HepG2 (cell line): ENCODE measurements at regions of chrX and their contacts with region 1.

Region 1: GRCh38 chrX:150547375-150548115 is 20.9 kb upstream of the MTM1 start:
- DNase-seq: no peak
- ATAC-seq: peak; percentile 87
- H3K4me3 ChIP-seq: peak overlapping the region; percentile 23 to 72 (median 37); a peak in 5 of 6 replicates
- H3K27ac ChIP-seq: peak overlapping the region; percentile 48
- H3K4me1 ChIP-seq: peaks cover 71% of the 10 kb centered on the region
- H3K27me3 ChIP-seq: no peaks in the 10 kb centered on the region
- CTCF ChIP-seq: no peak
- EP300 ChIP-seq: no peak
- POLR2A ChIP-seq: peak in 1 of 2 experiments; percentile 18; a peak in 1 of 4 replicates
- RAD21 ChIP-seq: no peak

Region 2: GRCh38 chrX:150568320-150569154 is 21.0 kb after region 1 on chrX and contains the start of gene MTM1:
- CTCF ChIA-PET with region 1: no interaction called
- POLR2A ChIA-PET with region 1: interaction called, 63 read pairs
- in situ Hi-C with region 1: no loop called
- intact Hi-C with region 1: loop called (anchors 2 kb)
- DNase-seq: peak; percentile 91
- ATAC-seq: peak; percentile 78
- H3K4me3 ChIP-seq: peak within 1 kb of the TSS; percentile 76 to 93 (median 77)
- H3K27ac ChIP-seq: peak within 1 kb of the TSS; percentile 89
- H3K4me1 ChIP-seq: peaks cover 45% of the 10 kb centered on the region
- H3K27me3 ChIP-seq: no peaks in the 10 kb centered on the region; a peak in 1 of 5 replicates
- CTCF ChIP-seq: no peak
- EP300 ChIP-seq: no peak
- POLR2A ChIP-seq: peak; percentile 48 to 59; a peak in 3 of 4 replicates
- RAD21 ChIP-seq: no peak
- total RNA-seq, gene MTM1: 15.2 and 27.2 TPM in 2 replicates

Region 3: DNA sequence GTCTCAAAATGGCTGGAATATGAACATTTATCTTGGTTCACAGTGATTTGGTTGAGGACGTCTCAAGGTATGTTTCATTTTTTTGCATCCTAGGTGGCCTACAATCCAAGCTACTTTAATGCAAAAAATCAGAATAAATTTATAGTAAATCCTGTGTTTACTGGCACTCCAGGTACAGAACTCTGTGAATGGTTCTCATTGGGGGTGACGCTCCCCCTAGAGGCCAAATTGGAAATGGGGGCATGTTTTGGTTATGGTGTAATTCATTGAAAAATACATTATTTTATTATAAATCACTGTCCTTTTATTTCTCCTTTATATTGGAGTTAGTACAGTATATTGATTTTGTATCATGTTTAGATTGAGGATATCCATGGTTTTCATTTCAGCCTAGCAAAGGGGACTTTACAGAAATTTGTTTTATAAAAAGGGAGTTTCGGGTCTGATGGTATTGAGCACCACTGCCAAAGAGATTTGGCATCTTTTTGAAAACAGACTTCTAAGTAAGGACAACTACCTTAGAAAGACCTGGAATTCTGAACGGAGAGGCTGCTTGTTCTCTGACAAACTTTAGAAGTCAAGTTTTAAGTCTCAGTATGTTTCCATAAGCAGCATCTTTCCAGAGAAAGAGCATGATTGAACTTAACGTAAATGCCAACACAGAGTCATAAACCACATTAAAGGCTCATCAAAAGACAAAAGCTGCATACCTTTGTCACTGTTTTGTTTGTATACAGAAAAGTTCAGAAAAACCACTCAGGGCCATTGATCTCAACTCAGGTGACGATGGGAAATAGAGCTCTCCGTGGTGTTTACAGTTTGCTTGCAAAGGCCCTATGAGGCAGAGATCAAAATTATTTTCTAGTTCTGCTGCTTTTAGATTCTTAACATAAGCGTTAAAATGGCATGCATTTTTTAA is 40.3 kb after region 1 on chrX:
- CTCF ChIA-PET with region 1: interaction called, 5 read pairs
- POLR2A ChIA-PET with region 1: no interaction called
- in situ Hi-C with region 1: no loop called
- intact Hi-C with region 1: loop called (anchors 1 kb)
- DNase-seq: no peak
- ATAC-seq: no peak
- H3K4me3 ChIP-seq: no peak overlapping the region
- H3K27ac ChIP-seq: no peak overlapping the region
- H3K4me1 ChIP-seq: peaks cover 26% of the 10 kb centered on the region
- H3K27me3 ChIP-seq: no peaks in the 10 kb centered on the region
- CTCF ChIP-seq: peak; percentile 38
- EP300 ChIP-seq: no peak
- POLR2A ChIP-seq: no peak
- RAD21 ChIP-seq: no peak

Region 4: DNA sequence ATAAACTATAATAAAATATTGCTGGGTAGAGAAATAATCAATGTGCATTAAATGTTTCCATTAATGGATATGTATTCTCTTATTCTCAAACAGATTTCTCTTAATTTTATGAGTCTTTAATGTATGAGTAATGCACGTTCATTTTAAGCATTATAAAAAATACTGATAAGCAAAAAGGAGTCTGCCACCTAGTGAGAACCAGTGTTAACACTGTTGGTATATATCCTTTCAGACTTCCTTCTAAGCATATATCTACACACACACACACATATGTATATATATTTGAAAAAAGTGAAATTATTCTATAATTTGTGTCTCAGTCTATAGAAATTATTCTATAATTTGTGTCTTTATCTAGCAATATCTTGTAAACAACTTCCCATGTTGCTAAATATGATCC is 95.7 kb after region 1 on chrX:
- CTCF ChIA-PET with region 1: no interaction called
- POLR2A ChIA-PET with region 1: interaction called, 3 read pairs
- in situ Hi-C with region 1: no loop called
- intact Hi-C with region 1: loop called (anchors 1 kb)
- DNase-seq: no peak
- ATAC-seq: no peak
- H3K4me3 ChIP-seq: no peak overlapping the region
- H3K27ac ChIP-seq: no peak overlapping the region
- H3K4me1 ChIP-seq: no peaks in the 10 kb centered on the region
- H3K27me3 ChIP-seq: no peaks in the 10 kb centered on the region
- CTCF ChIP-seq: no peak
- EP300 ChIP-seq: no peak
- POLR2A ChIP-seq: no peak
- RAD21 ChIP-seq: no peak

Region 5: DNA sequence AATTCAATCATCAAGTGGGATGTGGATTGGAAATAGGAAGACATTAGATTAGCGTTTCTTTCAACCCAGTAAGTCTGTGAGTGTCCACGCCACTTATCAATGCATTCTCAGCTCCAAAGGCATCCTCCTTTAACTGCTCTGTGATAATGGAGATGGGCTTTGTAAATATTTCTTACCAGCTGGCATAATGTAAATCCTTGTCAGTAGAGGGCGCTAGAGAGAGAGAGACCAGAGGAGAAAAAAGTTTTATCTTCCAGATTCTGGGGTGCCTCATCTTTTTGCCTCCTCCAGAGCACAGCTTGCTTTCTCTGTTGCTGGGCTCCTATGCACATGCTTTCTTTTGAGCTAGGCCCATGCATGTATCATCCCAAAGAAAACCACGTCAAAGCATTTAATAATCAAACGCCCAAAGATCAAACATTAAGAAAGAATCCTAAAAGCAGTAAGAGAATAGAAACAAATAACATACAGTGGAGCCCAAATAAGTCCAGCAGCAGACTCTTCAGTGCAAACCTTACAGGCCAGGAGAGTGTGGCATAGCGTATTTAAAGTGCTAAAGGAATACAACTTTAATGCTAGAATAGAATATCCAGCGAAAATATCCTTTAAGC is 136.1 kb after region 1 on chrX:
- CTCF ChIA-PET with region 1: interaction called, 4 read pairs
- POLR2A ChIA-PET with region 1: no interaction called
- in situ Hi-C with region 1: loop called (anchors 10 kb)
- intact Hi-C with region 1: loop called (anchors 1 kb)
- DNase-seq: peak; percentile 26
- ATAC-seq: no peak
- H3K4me3 ChIP-seq: no peak overlapping the region
- H3K27ac ChIP-seq: no peak overlapping the region
- H3K4me1 ChIP-seq: no peaks in the 10 kb centered on the region
- H3K27me3 ChIP-seq: no peaks in the 10 kb centered on the region
- CTCF ChIP-seq: peak; percentile 50
- EP300 ChIP-seq: no peak
- POLR2A ChIP-seq: no peak
- RAD21 ChIP-seq: no peak

Region 6: DNA sequence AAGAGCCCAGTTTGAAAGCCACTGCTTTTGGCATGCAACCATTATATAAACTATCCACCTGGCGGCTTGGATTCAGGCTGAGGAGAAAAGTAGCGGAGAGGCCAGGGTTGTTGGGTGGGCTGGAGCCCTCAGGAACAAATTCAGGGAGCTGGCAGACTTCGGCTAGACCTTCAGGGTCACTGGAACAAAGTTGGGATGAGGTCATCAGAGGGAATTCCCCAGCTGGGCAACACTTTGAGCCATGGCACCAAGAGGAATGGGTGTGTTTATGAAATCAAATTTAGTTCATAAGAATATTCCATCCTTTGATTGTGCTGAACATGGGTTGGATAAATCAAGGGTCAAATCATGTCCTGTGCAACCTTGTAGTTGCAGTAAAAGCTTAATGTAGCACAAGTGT is 167.6 kb after region 1 on chrX:
- CTCF ChIA-PET with region 1: no interaction called
- POLR2A ChIA-PET with region 1: no interaction called
- in situ Hi-C with region 1: no loop called
- intact Hi-C with region 1: loop called (anchors 10 kb)
- DNase-seq: no peak
- ATAC-seq: no peak
- H3K4me3 ChIP-seq: no peak overlapping the region
- H3K27ac ChIP-seq: no peak overlapping the region
- H3K4me1 ChIP-seq: no peaks in the 10 kb centered on the region
- H3K27me3 ChIP-seq: no peaks in the 10 kb centered on the region
- CTCF ChIP-seq: no peak
- EP300 ChIP-seq: no peak
- POLR2A ChIP-seq: no peak
- RAD21 ChIP-seq: no peak